ENCODE measurements at regions of chr6 and their contacts with region 1.

Region 1: DNA sequence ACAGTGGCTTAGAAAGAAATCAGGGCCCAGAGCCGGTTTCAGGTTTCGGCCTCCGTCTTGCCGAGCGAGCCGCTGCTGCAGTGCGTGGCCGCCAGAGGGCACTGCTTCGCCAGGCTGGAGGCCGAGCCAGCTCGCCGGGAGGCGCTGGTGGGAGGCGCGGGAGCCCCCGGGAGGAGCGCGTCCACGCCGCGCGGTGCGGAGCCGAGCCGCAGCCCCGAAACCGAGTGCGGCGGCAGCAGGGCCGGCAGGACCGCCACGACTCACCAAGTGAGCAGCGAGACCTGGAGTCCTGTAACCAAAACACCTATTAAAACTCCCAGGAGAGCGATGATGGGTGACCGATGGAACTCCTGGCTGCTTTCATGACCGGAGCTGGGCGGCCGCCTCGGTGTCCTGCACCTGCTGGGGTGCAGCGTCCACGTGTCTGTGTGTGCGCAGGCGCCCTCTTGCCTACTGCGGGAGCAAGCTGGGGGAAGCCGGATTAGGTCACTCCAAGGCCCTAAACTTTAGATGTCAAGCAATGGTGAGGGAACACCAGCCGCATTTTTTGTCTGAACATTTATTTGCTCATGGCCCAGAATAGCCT is 186.9 kb upstream of the UST start:
- DNase-seq: peak; percentile 44 to 81 (median 69)
- ATAC-seq: peak; percentile 94
- H3K4me3 ChIP-seq: peak overlapping the region in 1 of 2 experiments; percentile 46
- H3K4me3 Mint-ChIP-seq: peak overlapping the region; percentile 35
- H3K27ac ChIP-seq: no peak overlapping the region
- H3K27ac Mint-ChIP-seq: no peak overlapping the region
- H3K4me1 ChIP-seq: peaks cover 11% of the 10 kb centered on the region
- H3K4me1 Mint-ChIP-seq: peaks cover 8% of the 10 kb centered on the region
- H3K27me3 ChIP-seq: no peaks in the 10 kb centered on the region
- H3K27me3 Mint-ChIP-seq: peaks cover 27% of the 10 kb centered on the region
- CTCF ChIP-seq: peak; percentile 98

Region 2: GRCh38 chr6:148538261-148539190 is 21.4 kb before region 1 on chr6:
- CTCF ChIA-PET with region 1: interaction called, 10 read pairs
- POLR2A ChIA-PET with region 1: no interaction called
- intact Hi-C with region 1: no loop called
- DNase-seq: no peak
- ATAC-seq: no peak
- H3K4me3 ChIP-seq: no peak overlapping the region
- H3K4me3 Mint-ChIP-seq: no peak overlapping the region
- H3K27ac ChIP-seq: no peak overlapping the region
- H3K27ac Mint-ChIP-seq: no peak overlapping the region
- H3K4me1 ChIP-seq: no peaks in the 10 kb centered on the region
- H3K4me1 Mint-ChIP-seq: no peaks in the 10 kb centered on the region
- H3K27me3 ChIP-seq: no peaks in the 10 kb centered on the region
- H3K27me3 Mint-ChIP-seq: peaks cover 7% of the 10 kb centered on the region
- CTCF ChIP-seq: no peak

Region 3: GRCh38 chr6:148572676-148573335 is 12.9 kb after region 1 on chr6:
- CTCF ChIA-PET with region 1: interaction called, 12 read pairs
- POLR2A ChIA-PET with region 1: no interaction called
- intact Hi-C with region 1: no loop called
- DNase-seq: no peak
- ATAC-seq: no peak
- H3K4me3 ChIP-seq: no peak overlapping the region
- H3K4me3 Mint-ChIP-seq: no peak overlapping the region
- H3K27ac ChIP-seq: no peak overlapping the region
- H3K27ac Mint-ChIP-seq: no peak overlapping the region
- H3K4me1 ChIP-seq: no peaks in the 10 kb centered on the region
- H3K4me1 Mint-ChIP-seq: no peaks in the 10 kb centered on the region
- H3K27me3 ChIP-seq: no peaks in the 10 kb centered on the region
- H3K27me3 Mint-ChIP-seq: peaks cover 23% of the 10 kb centered on the region
- CTCF ChIP-seq: no peak

Region 4: GRCh38 chr6:148947621-148948444 is 387.9 kb after region 1 on chr6:
- CTCF ChIA-PET with region 1: interaction called, 15 read pairs
- POLR2A ChIA-PET with region 1: no interaction called
- intact Hi-C with region 1: loop called (anchors 1 kb)
- DNase-seq: peak; percentile 56 to 86 (median 84)
- ATAC-seq: peak; percentile 94
- H3K4me3 ChIP-seq: no peak overlapping the region
- H3K4me3 Mint-ChIP-seq: no peak overlapping the region
- H3K27ac ChIP-seq: no peak overlapping the region
- H3K27ac Mint-ChIP-seq: no peak overlapping the region
- H3K4me1 ChIP-seq: no peaks in the 10 kb centered on the region
- H3K4me1 Mint-ChIP-seq: no peaks in the 10 kb centered on the region
- H3K27me3 ChIP-seq: no peaks in the 10 kb centered on the region
- H3K27me3 Mint-ChIP-seq: peaks cover 4% of the 10 kb centered on the region
- CTCF ChIP-seq: peak; percentile 74

Region 5: DNA sequence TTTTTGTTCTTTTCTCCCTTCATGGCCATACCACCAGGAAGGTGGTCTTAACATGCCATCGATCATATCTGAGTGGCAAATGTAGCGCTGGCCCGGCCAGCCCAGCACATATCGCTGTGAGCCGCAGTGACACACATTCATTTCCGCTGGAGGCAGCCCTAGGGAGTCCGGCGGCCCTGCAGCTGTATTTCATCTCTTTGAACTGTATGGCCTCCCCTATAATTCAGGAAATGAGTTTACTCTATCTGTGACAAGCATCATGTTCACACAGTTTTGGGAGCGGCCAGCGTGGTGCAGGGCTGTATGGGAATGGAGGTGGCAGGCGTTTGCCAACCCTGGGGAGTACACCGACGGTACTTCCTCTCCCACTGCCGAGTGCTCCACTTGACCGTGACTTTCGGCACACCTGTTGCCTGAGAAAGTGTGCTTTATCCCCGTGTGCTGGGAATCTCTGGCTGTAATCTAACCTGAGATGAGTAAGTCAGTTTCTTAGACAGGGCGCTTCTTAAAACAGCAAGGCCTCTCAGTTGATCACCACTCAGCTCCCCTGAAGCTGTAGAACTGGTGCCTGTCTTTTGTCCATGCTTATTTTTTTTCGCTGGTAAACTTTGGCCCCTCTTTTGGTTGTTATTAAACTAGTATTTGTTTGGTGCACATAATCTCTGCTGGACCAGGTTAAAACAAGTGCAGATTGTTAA is 500.5 kb after region 1 on chr6:
- CTCF ChIA-PET with region 1: no interaction called
- POLR2A ChIA-PET with region 1: no interaction called
- intact Hi-C with region 1: no loop called
- DNase-seq: peak in 8 of 9 experiments; percentile 31 to 76 (median 55)
- ATAC-seq: peak; percentile 83
- H3K4me3 ChIP-seq: peak overlapping the region; percentile 11 to 24
- H3K4me3 Mint-ChIP-seq: peak overlapping the region; percentile 71
- H3K27ac ChIP-seq: peak overlapping the region in 1 of 2 experiments; percentile 41
- H3K27ac Mint-ChIP-seq: peak overlapping the region; percentile 81
- H3K4me1 ChIP-seq: peaks cover 24% of the 10 kb centered on the region
- H3K4me1 Mint-ChIP-seq: peaks cover 28% of the 10 kb centered on the region
- H3K27me3 ChIP-seq: no peaks in the 10 kb centered on the region
- H3K27me3 Mint-ChIP-seq: no peaks in the 10 kb centered on the region
- CTCF ChIP-seq: no peak

Measured in CD8-positive, alpha-beta T cell (primary cell).